ENCODE measurements at regions of chr6 and their contacts with region 1.

Region 1: DNA sequence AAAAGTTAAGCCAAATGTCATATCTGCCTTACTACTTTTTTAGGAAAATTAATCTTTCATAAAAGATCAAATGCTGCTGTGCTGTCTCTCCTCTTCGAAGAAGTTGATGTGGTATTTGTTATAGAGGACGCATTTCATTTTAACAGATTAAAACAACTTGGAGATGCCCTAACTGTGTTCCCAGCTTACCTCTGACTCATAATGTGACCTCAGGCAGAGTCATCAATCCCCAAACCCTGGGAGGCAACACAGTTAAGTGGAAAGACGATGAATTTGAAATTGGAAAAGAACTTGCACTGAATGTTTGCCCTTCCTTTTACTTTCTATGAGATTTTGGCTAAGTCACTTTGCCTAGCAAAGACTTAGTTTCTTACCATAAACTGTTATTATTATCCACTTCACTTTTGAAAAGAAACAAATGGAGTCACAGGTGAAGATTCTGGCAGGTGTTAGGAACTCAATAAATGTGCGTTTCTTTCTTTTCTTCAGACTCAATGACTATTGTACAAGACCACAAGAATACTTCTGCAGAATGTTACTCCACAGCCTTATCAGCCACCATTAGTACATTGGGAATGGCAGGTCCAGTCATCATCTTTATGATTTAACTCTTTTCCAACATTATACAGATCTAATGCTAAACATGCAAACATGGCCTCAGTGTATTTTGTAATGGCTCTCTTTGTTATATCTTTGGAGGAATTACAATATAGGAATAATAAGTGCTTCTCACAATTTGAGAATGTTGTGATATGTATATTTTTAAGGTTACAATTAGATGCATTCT is 102.6 kb downstream of the COL21A1 start:
- DNase-seq: no peak
- H3K4me3 ChIP-seq: no peak overlapping the region
- H3K27ac ChIP-seq: no peak overlapping the region
- H3K4me1 ChIP-seq: no peaks in the 10 kb centered on the region
- H3K27me3 ChIP-seq: no peaks in the 10 kb centered on the region
- CTCF ChIP-seq: no peak
- EP300 ChIP-seq: no peak
- POLR2A ChIP-seq: no peak

Region 2: GRCh38 chr6:56162081-56162480 is 17.4 kb after region 1 on chr6:
- in situ Hi-C with region 1: no loop called
- intact Hi-C with region 1: loop called (anchors 2 kb)
- DNase-seq: no peak
- H3K4me3 ChIP-seq: no peak overlapping the region
- H3K27ac ChIP-seq: no peak overlapping the region
- H3K4me1 ChIP-seq: no peaks in the 10 kb centered on the region
- H3K27me3 ChIP-seq: no peaks in the 10 kb centered on the region
- CTCF ChIP-seq: no peak
- EP300 ChIP-seq: no peak
- POLR2A ChIP-seq: no peak

Measured in transverse colon (tissue), 4 donors.